ENCODE measurements at regions of chr16 and their contacts with region 1.

Region 1: DNA sequence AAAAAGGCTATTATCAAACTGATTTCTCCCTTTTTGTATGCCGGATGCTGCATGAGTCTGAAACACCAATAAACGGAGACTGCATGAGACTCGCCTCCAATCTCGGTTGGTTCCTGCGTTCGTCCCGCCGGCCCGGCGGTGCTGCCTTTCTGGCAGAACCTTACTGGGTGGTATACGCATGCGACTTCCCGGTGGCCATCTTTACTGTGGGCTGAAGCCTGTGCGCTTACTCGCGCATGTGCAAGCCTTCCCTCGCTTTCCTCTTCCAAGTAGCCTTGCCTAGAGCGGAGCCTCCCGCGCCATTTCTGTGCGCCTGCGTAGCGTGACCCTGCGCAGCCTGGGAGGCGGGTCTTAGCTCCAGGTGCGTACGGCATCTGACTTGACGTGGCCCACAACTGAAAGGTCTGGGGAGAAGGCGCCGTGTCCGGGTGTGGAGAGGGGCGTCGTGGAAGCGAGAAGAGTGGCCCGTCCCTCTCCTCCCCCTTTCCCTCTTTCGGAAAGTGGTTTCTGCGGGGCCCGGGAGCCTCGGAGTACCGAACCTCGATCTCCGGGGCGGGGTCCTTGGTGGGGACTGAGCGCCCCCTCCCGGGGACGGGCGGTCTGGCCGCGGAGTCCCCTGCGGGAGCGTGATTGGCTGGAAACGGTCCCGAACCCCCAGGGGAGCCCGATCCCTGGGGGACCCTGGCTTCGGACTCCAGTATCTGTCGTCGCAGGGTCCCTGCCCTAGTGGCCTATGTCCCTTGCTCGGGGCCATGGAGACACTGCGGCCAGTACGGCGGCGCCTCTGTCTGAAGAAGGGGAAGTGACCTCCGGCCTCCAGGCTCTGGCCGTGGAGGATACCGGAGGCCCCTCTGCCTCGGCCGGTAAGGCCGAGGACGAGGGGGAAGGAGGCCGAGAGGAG is at the start of gene PAGR1:
- DNase-seq: peak; percentile 99
- ATAC-seq: peak; percentile 72
- H3K4me3 Mint-ChIP-seq: peak within 1 kb of the TSS; percentile 84
- H3K27ac Mint-ChIP-seq: peak within 1 kb of the TSS; percentile 97
- H3K4me1 Mint-ChIP-seq: peaks cover 57% of the 10 kb centered on the region
- H3K27me3 Mint-ChIP-seq: no peaks in the 10 kb centered on the region
- total RNA-seq, gene PAGR1: 20.6 to 25.6 TPM

Region 2: GRCh38 chr16:30075507-30076275 is 259.6 kb after region 1 on chr16 and contains the start of gene PPP4C:
- CTCF ChIA-PET with region 1: no interaction called
- POLR2A ChIA-PET with region 1: interaction called, 11 read pairs
- intact Hi-C with region 1: no loop called
- DNase-seq: peak; percentile 96
- ATAC-seq: peak; percentile 82
- H3K4me3 Mint-ChIP-seq: peak within 1 kb of the TSS; percentile 89
- H3K27ac Mint-ChIP-seq: peak within 1 kb of the TSS; percentile 91
- H3K4me1 Mint-ChIP-seq: peaks cover 26% of the 10 kb centered on the region
- H3K27me3 Mint-ChIP-seq: no peaks in the 10 kb centered on the region
- total RNA-seq, gene PPP4C: 106 to 113 TPM